ENCODE measurements at regions of chr1 and their contacts with region 1.

Region 1: GRCh38 chr1:40592107-40592803 is 60.8 kb downstream of the ZNF684 start:
- DNase-seq: peak; percentile 28
- ATAC-seq: no peak
- H3K4me3 Mint-ChIP-seq: no peak overlapping the region
- H3K27ac Mint-ChIP-seq: no peak overlapping the region
- H3K4me1 Mint-ChIP-seq: peaks cover 4% of the 10 kb centered on the region
- H3K27me3 Mint-ChIP-seq: peaks cover 3% of the 10 kb centered on the region

Region 2: GRCh38 chr1:40582116-40582515 is 10.1 kb before region 1 on chr1:
- CTCF ChIA-PET with region 1: interaction called, 4 read pairs
- POLR2A ChIA-PET with region 1: no interaction called
- intact Hi-C with region 1: loop called in 1 of 2 experiments (anchors 1 kb)
- DNase-seq: no peak
- ATAC-seq: no peak
- H3K4me3 Mint-ChIP-seq: no peak overlapping the region
- H3K27ac Mint-ChIP-seq: no peak overlapping the region
- H3K4me1 Mint-ChIP-seq: peaks cover 12% of the 10 kb centered on the region
- H3K27me3 Mint-ChIP-seq: peaks cover 6% of the 10 kb centered on the region

Region 3: GRCh38 chr1:40783001-40783905 is 191.0 kb after region 1 on chr1 and contains the start of gene KCNQ4:
- CTCF ChIA-PET with region 1: no interaction called
- POLR2A ChIA-PET with region 1: no interaction called
- intact Hi-C with region 1: no loop called
- DNase-seq: peak; percentile 48
- ATAC-seq: peak; percentile 56
- H3K4me3 Mint-ChIP-seq: peak within 1 kb of the TSS; percentile 64
- H3K27ac Mint-ChIP-seq: no peak within 1 kb of the TSS
- H3K4me1 Mint-ChIP-seq: peaks cover 6% of the 10 kb centered on the region
- H3K27me3 Mint-ChIP-seq: peaks cover 26% of the 10 kb centered on the region
- total RNA-seq, gene KCNQ4: 0.43 to 0.58 TPM

Measured in activated CD4-positive, alpha-beta T cell treated with anti-CD3 and anti-CD28 coated beads for 36 hours (primary cell).